ENCODE measurements at regions of chr1 and their contacts with region 1.

Region 1: GRCh38 chr1:111619635-111620440 is at the start of gene RAP1A:
- DNase-seq: peak; percentile 90
- H3K4me3 Mint-ChIP-seq: peak within 1 kb of the TSS; percentile 94
- H3K27ac Mint-ChIP-seq: peak within 1 kb of the TSS; percentile 74
- H3K4me1 Mint-ChIP-seq: peaks cover 26% of the 10 kb centered on the region
- H3K27me3 Mint-ChIP-seq: no peaks in the 10 kb centered on the region
- CTCF ChIP-seq: no peak
- total RNA-seq, gene RAP1A: 31.5 and 39.3 TPM in 2 replicates

Region 2: GRCh38 chr1:111463029-111463683 is 156.7 kb before region 1 on chr1:
- CTCF ChIA-PET with region 1: no interaction called
- POLR2A ChIA-PET with region 1: no interaction called
- intact Hi-C with region 1: no loop called
- DNase-seq: peak; percentile 46
- H3K4me3 Mint-ChIP-seq: no peak overlapping the region
- H3K27ac Mint-ChIP-seq: no peak overlapping the region
- H3K4me1 Mint-ChIP-seq: no peaks in the 10 kb centered on the region
- H3K27me3 Mint-ChIP-seq: no peaks in the 10 kb centered on the region
- CTCF ChIP-seq: no peak

Region 3: GRCh38 chr1:111592389-111593361 is 27.2 kb before region 1 on chr1:
- CTCF ChIA-PET with region 1: interaction called, 3 read pairs
- POLR2A ChIA-PET with region 1: interaction called, 43 read pairs
- intact Hi-C with region 1: loop called (anchors 2 kb)
- DNase-seq: peak; percentile 82
- H3K4me3 Mint-ChIP-seq: peak overlapping the region; percentile 39
- H3K27ac Mint-ChIP-seq: peak overlapping the region; percentile 21
- H3K4me1 Mint-ChIP-seq: peaks cover 11% of the 10 kb centered on the region
- H3K27me3 Mint-ChIP-seq: no peaks in the 10 kb centered on the region
- CTCF ChIP-seq: no peak

Region 4: DNA sequence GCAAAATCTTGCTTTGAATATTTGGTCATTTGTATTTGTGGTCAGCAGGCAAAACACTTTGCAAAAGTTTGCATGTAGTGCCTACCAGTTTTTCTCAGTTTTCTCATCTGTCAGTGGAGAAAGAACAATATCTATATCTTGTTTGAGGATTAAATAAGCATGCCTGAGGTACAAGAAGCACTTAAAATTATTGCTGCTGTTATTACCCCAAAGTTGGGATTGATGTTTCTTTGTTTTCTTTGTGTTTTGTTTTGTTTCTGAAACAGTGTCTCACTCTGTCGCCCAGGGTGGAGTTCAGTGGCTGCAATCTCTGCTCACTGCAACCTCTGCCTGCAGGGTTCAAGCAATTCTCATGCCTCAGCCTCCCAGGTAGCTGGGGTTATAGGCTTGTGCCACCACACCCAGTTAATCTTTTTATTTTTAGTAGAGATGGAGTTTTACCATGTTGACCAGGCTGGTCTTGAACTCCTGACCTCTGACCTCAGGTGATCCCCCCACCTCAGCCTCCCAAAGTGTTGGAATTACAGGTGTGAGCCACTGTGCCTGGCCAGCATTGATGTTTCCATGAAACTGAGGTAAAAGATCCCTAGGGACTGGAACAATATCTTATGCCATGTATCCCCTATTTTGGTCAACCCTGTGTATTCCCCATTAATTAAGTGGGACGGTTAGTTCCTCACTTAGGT is 15.6 kb after region 1 on chr1:
- CTCF ChIA-PET with region 1: no interaction called
- POLR2A ChIA-PET with region 1: no interaction called
- intact Hi-C with region 1: loop called (anchors 2 kb)
- DNase-seq: no peak
- H3K4me3 Mint-ChIP-seq: no peak overlapping the region
- H3K27ac Mint-ChIP-seq: no peak overlapping the region
- H3K4me1 Mint-ChIP-seq: peaks cover 16% of the 10 kb centered on the region
- H3K27me3 Mint-ChIP-seq: no peaks in the 10 kb centered on the region
- CTCF ChIP-seq: no peak

Region 5: DNA sequence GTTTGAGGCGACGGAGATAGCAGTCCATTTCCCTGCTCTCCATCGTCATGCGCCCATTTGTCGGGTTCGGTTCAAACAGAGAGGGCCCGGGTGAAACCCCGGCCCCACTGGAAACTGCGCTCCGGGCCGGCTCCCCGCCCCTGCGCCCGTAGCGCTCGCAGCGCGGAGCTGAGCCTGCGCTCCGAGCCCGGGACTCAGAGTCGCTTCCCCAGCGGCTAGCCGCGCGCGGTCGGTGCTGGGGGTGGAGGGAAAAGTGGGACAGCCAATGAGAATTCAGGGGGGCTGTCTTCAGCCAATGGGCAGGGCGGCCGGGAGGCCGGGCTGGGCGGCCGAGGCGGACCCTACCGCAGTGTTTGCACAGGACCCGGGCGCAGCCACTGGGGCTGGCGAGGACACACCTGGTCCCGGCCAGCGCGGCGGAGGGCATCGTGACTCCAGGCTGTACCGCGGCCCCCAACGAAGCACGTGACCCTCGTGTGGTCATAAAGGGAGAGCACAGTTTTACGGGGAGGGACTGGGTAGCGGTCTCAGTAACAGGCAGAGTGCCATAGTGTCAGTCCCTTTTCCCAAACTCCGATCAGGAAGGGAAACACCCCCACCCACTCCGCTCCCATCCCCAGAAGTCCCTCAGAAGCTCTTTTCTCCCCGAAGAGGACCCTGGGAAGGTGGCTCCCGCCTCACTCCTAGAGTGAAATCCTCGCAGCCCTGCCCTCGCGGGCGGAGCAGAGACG is 119.5 kb after region 1 on chr1 and contains the start of gene INKA2:
- CTCF ChIA-PET with region 1: no interaction called
- POLR2A ChIA-PET with region 1: interaction called, 17 read pairs
- intact Hi-C with region 1: no loop called
- DNase-seq: peak; percentile 92
- H3K4me3 Mint-ChIP-seq: peak within 1 kb of the TSS; percentile 82
- H3K27ac Mint-ChIP-seq: peak within 1 kb of the TSS; percentile 94
- H3K4me1 Mint-ChIP-seq: peaks cover 17% of the 10 kb centered on the region
- H3K27me3 Mint-ChIP-seq: no peaks in the 10 kb centered on the region
- CTCF ChIP-seq: no peak
- total RNA-seq, gene INKA2: 3.5 and 6.6 TPM in 2 replicates

Measured in MCF 10A (cell line).